Activated T-helper 2 cell treated with anti-CD3 and anti-CD28 coated beads, Interferon-gamma antibody, Interleukin-2, Interleukin-4, amounts not matched to agents 10 μg/mL and 5 μg/mL and 100 μg/mL, durations not matched to agents 14 hours and 24 hours and 36 hours (primary cell): ENCODE measurements at regions of chr5 and their contacts with region 1.

Region 1: DNA sequence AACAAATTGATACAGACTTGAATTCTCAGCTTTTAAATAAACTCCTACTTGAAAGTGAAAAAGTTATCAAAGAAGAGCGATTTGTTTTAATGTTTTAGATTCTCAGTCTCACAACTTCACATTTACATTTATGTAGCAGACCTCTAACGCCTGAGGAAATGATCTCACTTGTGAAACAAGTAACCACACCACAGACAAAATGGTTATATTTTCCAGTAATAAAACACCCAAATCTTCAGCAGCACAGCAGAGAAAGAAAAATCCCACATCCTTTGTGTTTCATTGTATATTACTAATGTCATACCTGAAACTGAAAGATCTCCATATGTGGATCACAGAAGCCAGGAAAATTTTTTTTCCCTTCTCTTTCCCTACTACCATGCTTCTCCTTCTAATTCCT is 29.8 kb upstream of the GZMA start:
- DNase-seq: no peak
- H3K4me3 Mint-ChIP-seq: peak overlapping the region; percentile 32
- H3K27ac Mint-ChIP-seq: peak overlapping the region; percentile 75
- H3K4me1 Mint-ChIP-seq: peaks cover 46% of the 10 kb centered on the region
- H3K27me3 Mint-ChIP-seq: no peaks in the 10 kb centered on the region

Region 2: DNA sequence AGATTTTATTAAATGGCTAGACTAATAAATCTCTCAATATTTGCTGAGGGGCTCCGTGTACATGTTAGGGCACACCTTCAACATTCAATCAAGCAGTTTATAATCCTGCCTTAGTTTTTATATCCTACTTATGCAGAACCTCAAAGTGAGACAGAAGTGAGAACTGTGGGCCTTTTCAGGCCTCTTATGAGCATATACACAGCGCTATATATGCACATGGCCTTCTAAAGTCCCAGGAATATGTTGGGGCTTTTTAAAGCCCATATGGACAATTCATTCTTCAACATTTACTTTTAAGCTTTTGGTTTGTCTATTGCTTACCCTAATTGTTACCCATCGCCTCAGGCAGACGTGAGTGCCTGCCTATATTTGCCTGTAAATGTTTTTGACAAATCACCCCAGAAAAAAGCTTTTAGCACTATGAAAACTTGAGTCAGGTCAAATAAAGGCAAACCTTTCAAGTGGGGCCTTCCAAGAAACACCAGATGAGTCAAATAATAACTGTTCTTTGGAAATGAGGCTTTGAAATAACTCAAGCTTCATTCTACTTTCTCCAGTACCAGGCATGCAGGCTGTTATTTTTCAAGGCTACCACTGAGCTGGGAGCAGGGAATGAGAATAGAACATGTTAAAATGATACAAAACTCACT is 145.4 kb before region 1 on chr5:
- intact Hi-C with region 1: loop called (anchors 5 kb)
- DNase-seq: no peak
- H3K4me3 Mint-ChIP-seq: no peak overlapping the region
- H3K27ac Mint-ChIP-seq: peak overlapping the region; percentile 56
- H3K4me1 Mint-ChIP-seq: peaks cover 21% of the 10 kb centered on the region
- H3K27me3 Mint-ChIP-seq: no peaks in the 10 kb centered on the region

Region 3: GRCh38 chr5:54985301-54986268 is 87.1 kb before region 1 on chr5 and contains the start of gene ESM1:
- intact Hi-C with region 1: no loop called
- DNase-seq: no peak
- H3K4me3 Mint-ChIP-seq: no peak within 1 kb of the TSS
- H3K27ac Mint-ChIP-seq: no peak within 1 kb of the TSS
- H3K4me1 Mint-ChIP-seq: peaks cover 71% of the 10 kb centered on the region
- H3K27me3 Mint-ChIP-seq: peaks cover 20% of the 10 kb centered on the region
- total RNA-seq, gene ESM1: 0.11 and 0.37 TPM in 2 replicates

Region 4: DNA sequence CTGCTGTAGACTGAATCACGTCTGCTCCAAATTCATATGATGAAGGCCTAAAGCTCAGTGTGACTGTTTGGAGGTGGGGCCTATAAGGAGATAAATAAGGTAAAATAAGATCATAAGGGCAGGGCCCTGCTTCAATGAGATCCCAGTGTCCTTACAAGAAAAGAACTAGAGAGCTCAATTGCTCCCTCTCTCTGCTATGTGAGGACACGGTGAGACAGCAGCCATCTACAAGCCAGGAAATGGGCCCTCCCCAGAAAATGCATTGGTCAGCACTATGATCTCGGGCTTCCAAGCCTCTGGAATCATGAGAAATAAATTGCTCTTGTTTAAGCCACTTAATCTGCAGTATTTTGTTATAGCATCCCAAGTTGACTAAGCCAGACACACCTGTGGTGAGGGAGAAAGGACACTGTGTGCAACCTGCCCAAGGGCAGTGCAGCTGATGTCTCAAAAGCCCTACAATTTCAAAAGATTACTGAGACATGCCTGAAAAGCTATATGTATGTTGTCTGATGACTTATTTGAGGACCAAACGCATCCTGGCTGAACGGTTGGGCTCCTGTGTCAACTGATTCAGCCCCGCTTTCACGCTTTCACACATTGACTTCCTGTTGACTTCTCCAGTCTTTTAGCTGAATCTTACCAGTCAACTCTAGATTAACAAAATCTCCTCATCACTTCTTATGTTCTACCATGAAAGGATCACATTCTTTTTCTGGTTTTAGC is 35.5 kb before region 1 on chr5:
- intact Hi-C with region 1: loop called (anchors 2 kb)
- DNase-seq: peak; percentile 69
- H3K4me3 Mint-ChIP-seq: no peak overlapping the region
- H3K27ac Mint-ChIP-seq: peak overlapping the region; percentile 93
- H3K4me1 Mint-ChIP-seq: peaks cover 42% of the 10 kb centered on the region
- H3K27me3 Mint-ChIP-seq: no peaks in the 10 kb centered on the region

Region 5: GRCh38 chr5:55134053-55134722 is 61.5 kb after region 1 on chr5:
- intact Hi-C with region 1: loop called (anchors 1 kb)
- DNase-seq: peak; percentile 44
- H3K4me3 Mint-ChIP-seq: no peak overlapping the region
- H3K27ac Mint-ChIP-seq: peak overlapping the region; percentile 39
- H3K4me1 Mint-ChIP-seq: peaks cover 41% of the 10 kb centered on the region
- H3K27me3 Mint-ChIP-seq: peaks cover 2% of the 10 kb centered on the region